Posterior vena cava (tissue), 2 donors: ENCODE measurements at regions of chr16 and their contacts with region 1.

Region 1: GRCh38 chr16:84714028-84714427 is 14.2 kb downstream of the USP10 start:
- DNase-seq: no peak

Region 2: DNA sequence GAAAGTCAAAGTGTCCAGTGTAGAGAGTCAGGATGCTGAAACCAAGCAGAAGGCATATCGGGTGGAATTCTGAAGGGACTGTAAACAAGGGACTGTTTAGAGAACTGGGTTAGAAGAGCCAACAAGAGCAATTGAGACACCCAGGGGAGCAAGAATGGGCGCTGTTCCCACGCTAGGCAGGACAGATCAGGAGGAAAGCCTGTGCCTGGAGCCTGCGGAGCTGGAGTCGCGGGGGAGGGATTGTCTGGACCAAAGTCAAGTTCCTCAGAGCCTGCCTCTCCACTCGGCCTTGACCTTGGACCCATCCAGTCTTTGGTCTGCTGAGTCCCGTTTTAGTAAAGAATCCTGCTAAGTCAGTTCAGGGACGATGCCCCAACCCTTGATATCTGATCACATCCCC is 80.4 kb before region 1 on chr16:
- intact Hi-C with region 1: loop called in 1 of 2 experiments (anchors 5 kb)
- DNase-seq: peak; percentile 95

Region 3: GRCh38 chr16:84663433-84664101 is 50.5 kb before region 1 on chr16:
- intact Hi-C with region 1: loop called in 1 of 2 experiments (anchors 10 kb)
- DNase-seq: peak; percentile 9